Calu3 (cell line): ENCODE measurements at regions of chr22 and their contacts with region 1.

Region 1: DNA sequence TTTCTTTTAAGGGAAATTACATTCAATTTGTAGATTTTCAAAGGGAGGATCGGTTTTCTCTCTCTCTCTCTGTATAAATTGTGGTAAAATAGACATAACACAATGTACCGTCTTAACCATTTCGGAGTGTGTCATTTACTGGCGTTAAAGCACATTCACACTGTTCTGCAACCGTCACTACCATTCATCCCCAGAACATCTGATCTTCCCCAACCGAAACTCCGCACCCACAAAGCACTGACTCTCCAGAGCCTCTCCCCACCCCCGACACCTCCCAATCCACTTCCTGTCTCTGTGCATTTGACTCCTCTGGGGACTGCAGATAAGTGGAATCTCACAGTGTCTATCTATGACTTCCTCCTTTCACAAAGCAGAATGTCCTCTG is 15.9 kb upstream of the GRAMD4 start:
- DNase-seq: no peak
- H3K4me3 Mint-ChIP-seq: no peak overlapping the region
- H3K27ac Mint-ChIP-seq: no peak overlapping the region
- H3K4me1 Mint-ChIP-seq: peaks cover 11% of the 10 kb centered on the region
- H3K27me3 Mint-ChIP-seq: no peaks in the 10 kb centered on the region
- CTCF ChIP-seq: no peak

Region 2: GRCh38 chr22:46661221-46661851 is 57.0 kb after region 1 on chr22:
- CTCF ChIA-PET with region 1: interaction called, 4 read pairs
- intact Hi-C with region 1: loop called (anchors 10 kb)
- DNase-seq: peak; percentile 54
- H3K4me3 Mint-ChIP-seq: no peak overlapping the region
- H3K27ac Mint-ChIP-seq: peak overlapping the region; percentile 30
- H3K4me1 Mint-ChIP-seq: peaks cover 22% of the 10 kb centered on the region
- H3K27me3 Mint-ChIP-seq: no peaks in the 10 kb centered on the region
- CTCF ChIP-seq: no peak

Region 3: DNA sequence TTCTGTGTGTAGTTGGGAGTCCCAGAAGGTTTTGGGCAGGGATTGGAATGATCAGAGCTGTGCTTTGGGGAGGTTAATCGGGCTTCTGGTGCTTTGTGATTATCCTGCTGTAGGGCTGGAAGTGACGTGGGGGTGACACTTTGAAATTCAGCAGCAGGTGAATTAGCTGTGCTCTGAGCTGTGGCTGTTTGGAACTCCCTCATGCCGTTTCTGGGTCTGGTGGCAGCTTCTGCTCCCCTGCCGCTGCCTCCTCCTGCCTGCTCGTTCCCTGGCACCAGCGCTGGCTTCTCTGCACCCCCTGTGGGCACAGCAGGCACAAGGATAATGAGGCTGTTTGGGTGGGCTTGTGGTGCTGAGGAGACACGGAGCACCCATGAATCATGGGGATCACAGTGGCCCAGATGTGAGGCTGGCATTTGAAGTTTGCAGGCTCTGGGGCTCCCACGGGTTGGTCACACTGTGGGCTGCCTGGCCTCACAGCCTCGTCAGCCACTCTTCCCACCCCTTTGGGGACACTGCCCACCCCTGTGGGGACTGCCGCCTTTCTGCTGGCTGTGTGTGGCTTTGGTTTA is 207.8 kb after region 1 on chr22:
- CTCF ChIA-PET with region 1: no interaction called
- intact Hi-C with region 1: no loop called
- DNase-seq: no peak
- H3K4me3 Mint-ChIP-seq: no peak overlapping the region
- H3K27ac Mint-ChIP-seq: no peak overlapping the region
- H3K4me1 Mint-ChIP-seq: peaks cover 29% of the 10 kb centered on the region
- H3K27me3 Mint-ChIP-seq: no peaks in the 10 kb centered on the region
- CTCF ChIP-seq: no peak